Heart right ventricle (tissue), 16 donors: ENCODE measurements at regions of chr2 and their contacts with region 1.

Region 1: DNA sequence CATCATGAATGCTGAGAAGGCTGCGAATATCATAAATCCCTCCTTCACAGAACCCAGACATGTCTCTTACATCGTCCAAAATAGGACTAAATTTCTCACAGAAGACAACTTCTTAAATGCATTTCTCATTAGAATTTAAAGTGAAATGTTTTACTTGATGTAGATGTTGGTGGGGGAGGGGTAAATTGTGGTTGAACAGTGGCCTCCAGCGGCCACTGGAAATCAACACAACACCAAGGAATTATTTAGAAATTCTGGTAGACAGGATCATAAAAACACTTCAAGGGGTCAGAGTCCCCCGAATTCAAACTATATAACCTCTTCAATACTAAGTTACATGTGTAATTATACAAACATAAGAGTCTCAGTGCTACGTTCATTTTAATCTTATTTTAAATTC is 135.9 kb downstream of the ABCA12 start:
- DNase-seq: peak in 1 of 2 donors; percentile 10
- ATAC-seq: no peak
- H3K4me3 ChIP-seq: no peak overlapping the region
- H3K27ac ChIP-seq: no peak overlapping the region
- H3K4me1 ChIP-seq: no peaks in the 10 kb centered on the region
- H3K27me3 ChIP-seq: no peaks in the 10 kb centered on the region
- CTCF ChIP-seq: peak in 8 of 9 donors; percentile 31 to 67 (median 50)

Region 2: GRCh38 chr2:213251618-213252017 is 1750.9 kb before region 1 on chr2:
- intact Hi-C with region 1: loop called in 2 of 10 experiments (anchors 10 kb)
- DNase-seq: no peak
- ATAC-seq: peak in 3 of 8 donors; percentile 34 to 74 (median 43)
- H3K4me3 ChIP-seq: no peak overlapping the region
- H3K27ac ChIP-seq: no peak overlapping the region
- H3K4me1 ChIP-seq: no peaks in the 10 kb centered on the region
- H3K27me3 ChIP-seq: peaks cover 0 to 4% (median 0%) of the 10 kb centered on the region in 7 donors
- CTCF ChIP-seq: peak; percentile 54 to 85 (median 71)

Region 3: GRCh38 chr2:213806125-213806726 is 1196.3 kb before region 1 on chr2:
- intact Hi-C with region 1: loop called in 3 of 10 experiments (anchors 5 to 10 kb)
- DNase-seq: no peak
- ATAC-seq: no peak
- H3K4me3 ChIP-seq: no peak overlapping the region
- H3K27ac ChIP-seq: no peak overlapping the region
- H3K4me1 ChIP-seq: no peaks in the 10 kb centered on the region
- H3K27me3 ChIP-seq: no peaks in the 10 kb centered on the region
- CTCF ChIP-seq: peak in 6 of 9 donors; percentile 26 to 50 (median 44)

Region 4: GRCh38 chr2:214737188-214737587 is 265.3 kb before region 1 on chr2:
- intact Hi-C with region 1: no loop called
- DNase-seq: no peak
- ATAC-seq: no peak
- H3K4me3 ChIP-seq: no peak overlapping the region
- H3K27ac ChIP-seq: no peak overlapping the region
- H3K4me1 ChIP-seq: no peaks in the 10 kb centered on the region
- H3K27me3 ChIP-seq: no peaks in the 10 kb centered on the region
- CTCF ChIP-seq: no peak

Region 5: GRCh38 chr2:215120401-215120800 is 117.9 kb after region 1 on chr2:
- intact Hi-C with region 1: no loop called
- DNase-seq: no peak
- ATAC-seq: no peak
- H3K4me3 ChIP-seq: no peak overlapping the region
- H3K27ac ChIP-seq: no peak overlapping the region
- H3K4me1 ChIP-seq: no peaks in the 10 kb centered on the region
- H3K27me3 ChIP-seq: no peaks in the 10 kb centered on the region
- CTCF ChIP-seq: no peak

Region 6: DNA sequence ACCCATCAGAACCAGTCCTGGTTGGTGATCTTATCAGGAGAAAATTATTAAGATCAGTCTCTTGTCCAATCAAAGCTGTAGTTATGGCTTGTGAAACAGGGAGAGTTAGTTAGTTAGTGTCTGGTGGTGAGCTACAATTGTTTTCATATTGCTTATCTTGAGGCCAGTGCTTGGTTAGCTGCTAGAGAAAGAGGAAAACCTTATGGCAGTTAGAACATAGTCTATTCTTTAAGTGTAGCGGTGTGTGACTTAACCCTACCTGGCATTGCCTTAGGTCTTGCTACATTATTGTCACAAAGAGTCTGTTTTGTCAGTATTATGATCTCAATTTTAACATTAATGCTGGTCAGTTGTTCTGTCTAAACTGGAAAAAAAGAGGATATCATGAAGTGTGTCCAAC is 147.4 kb after region 1 on chr2:
- intact Hi-C with region 1: no loop called
- DNase-seq: no peak
- ATAC-seq: no peak
- H3K4me3 ChIP-seq: no peak overlapping the region
- H3K27ac ChIP-seq: no peak overlapping the region
- H3K4me1 ChIP-seq: no peaks in the 10 kb centered on the region
- H3K27me3 ChIP-seq: no peaks in the 10 kb centered on the region
- CTCF ChIP-seq: no peak